AG04449 (cell line): ENCODE measurements at regions of chr2 and their contacts with region 1.

Region 1: DNA sequence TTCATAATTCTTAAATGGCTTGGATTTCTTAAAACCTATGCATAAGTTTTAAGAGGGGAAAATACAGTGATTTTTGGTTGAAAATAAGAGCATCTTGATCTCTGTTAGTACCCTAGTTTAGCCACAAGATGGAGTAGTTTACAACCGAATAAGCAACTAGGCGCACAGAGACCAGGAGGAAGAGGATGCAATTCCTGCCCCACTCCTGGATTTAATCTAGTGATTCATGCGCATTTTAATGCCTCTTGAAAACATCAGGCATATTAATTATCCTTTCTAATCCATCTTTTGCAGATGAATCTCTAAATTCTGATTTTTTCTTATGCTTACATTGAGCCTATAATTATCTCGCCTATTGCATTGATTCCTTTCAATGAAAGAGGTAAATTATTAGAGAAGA is 76.7 kb downstream of the MRPS9 start:
- DNase-seq: peak; percentile 40
- H3K4me3 ChIP-seq: no peak overlapping the region
- CTCF ChIP-seq: peak; percentile 61

Region 2: DNA sequence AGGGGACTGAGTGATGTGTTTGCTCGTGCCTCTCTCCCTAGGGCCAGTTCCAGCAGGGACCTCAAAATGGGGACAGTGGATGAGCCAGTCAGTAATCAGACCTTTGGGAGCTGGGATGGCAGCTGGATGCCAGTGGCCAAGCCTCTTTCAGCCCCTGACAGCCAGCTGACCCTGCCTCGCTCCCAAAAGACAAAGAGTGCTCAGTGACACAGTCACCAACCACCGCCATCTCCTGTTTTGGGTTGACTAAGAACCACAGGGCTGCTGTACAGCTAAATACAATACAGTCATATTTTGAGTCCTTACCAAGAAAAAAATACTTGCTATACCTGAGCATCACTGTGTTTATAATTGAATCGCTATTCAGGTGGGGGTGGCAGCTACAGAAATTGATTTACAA is 184.9 kb before region 1 on chr2:
- CTCF ChIA-PET with region 1: no interaction called
- POLR2A ChIA-PET with region 1: no interaction called
- DNase-seq: no peak
- H3K4me3 ChIP-seq: no peak overlapping the region
- CTCF ChIP-seq: no peak

Region 3: GRCh38 chr2:105052773-105053172 is 61.8 kb before region 1 on chr2:
- CTCF ChIA-PET with region 1: no interaction called
- POLR2A ChIA-PET with region 1: no interaction called
- DNase-seq: no peak
- H3K4me3 ChIP-seq: no peak overlapping the region
- CTCF ChIP-seq: no peak

Region 4: GRCh38 chr2:105085525-105085924 is 29.0 kb before region 1 on chr2:
- CTCF ChIA-PET with region 1: no interaction called
- POLR2A ChIA-PET with region 1: no interaction called
- DNase-seq: no peak
- H3K4me3 ChIP-seq: no peak overlapping the region
- CTCF ChIP-seq: no peak

Region 5: GRCh38 chr2:105102963-105103421 is 11.6 kb before region 1 on chr2:
- CTCF ChIA-PET with region 1: interaction called, 67 read pairs
- POLR2A ChIA-PET with region 1: no interaction called
- DNase-seq: peak; percentile 23
- H3K4me3 ChIP-seq: no peak overlapping the region
- CTCF ChIP-seq: no peak

Region 6: DNA sequence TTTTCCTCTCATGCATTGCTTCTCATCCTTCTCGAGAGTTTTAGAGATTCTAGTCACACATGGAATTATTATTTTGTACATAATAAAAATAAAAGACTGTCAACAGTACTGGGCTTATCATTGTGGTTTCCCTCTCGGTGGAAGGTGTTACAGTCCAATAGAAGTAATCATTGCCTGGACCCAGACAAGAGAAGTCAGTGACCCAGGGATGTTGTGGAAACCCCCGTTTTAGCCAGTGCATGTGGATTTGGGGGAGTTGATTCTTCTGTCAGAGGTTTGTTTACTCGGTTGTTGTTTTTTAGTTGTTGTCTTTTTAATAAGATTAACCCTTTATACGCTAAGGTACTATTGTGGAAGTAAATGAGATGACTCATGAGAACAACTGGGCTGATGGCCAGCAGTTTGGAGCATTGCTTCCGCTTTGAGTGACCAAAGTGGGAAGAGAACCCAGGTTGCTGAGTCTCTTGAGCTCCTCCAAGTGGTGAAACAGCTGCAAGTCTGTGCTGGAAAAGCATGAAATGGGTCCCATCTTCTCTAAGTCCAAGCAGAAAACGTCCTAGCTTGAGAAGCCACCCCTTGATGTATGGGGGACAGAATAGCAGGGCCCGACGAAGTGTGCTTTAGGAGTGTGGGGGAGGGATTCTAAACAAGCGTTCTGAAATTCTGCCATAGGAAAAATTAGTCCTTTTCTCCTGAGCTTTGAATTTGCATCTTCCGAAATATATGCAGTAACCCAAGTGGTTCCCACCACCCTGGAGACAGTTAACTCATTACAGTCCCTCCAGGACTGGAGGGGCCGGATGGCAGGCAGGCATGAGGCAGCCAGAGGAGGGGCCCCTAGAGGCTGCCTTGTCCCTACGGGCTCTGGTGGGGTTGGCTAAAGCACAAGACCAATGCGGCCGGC is 65.2 kb after region 1 on chr2:
- CTCF ChIA-PET with region 1: interaction called, 26 read pairs
- POLR2A ChIA-PET with region 1: no interaction called
- DNase-seq: no peak
- H3K4me3 ChIP-seq: no peak overlapping the region
- CTCF ChIP-seq: peak; percentile 33

Region 7: DNA sequence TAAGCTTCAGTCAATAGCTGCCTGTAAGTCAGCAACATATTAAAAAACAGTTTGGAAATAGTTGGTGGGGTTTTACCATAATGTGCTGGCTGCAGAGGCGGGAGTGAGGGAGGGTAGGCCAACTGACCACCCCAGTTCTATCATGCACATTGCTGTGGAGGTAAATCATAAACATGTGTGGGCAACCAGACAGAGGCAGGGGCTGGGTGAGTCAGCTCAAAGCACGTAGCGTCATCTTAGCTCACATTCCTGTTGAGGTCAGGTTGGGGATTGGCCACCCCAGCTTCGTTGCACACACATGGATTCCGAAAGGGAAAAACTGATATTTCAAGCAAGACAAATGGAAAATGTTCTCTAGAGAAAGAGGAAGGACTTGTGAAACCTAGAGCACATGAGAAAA is 146.5 kb after region 1 on chr2:
- CTCF ChIA-PET with region 1: interaction called, 12 read pairs
- POLR2A ChIA-PET with region 1: no interaction called
- DNase-seq: peak; percentile 88
- H3K4me3 ChIP-seq: no peak overlapping the region
- CTCF ChIP-seq: no peak

Region 8: GRCh38 chr2:105294844-105295481 is 180.4 kb after region 1 on chr2:
- CTCF ChIA-PET with region 1: interaction called, 161 read pairs
- POLR2A ChIA-PET with region 1: no interaction called
- DNase-seq: peak; percentile 28
- H3K4me3 ChIP-seq: no peak overlapping the region
- CTCF ChIP-seq: peak; percentile 68